Calu3 (cell line): ENCODE measurements at regions of chr11 and their contacts with region 1.

Region 1: GRCh38 chr11:102293873-102294601 is 23.2 kb upstream of the BIRC3 start:
- DNase-seq: no peak
- H3K4me3 Mint-ChIP-seq: peak overlapping the region; percentile 45
- H3K27ac Mint-ChIP-seq: peak overlapping the region; percentile 16
- H3K4me1 Mint-ChIP-seq: peaks cover 24% of the 10 kb centered on the region
- H3K27me3 Mint-ChIP-seq: no peaks in the 10 kb centered on the region
- CTCF ChIP-seq: no peak

Region 2: DNA sequence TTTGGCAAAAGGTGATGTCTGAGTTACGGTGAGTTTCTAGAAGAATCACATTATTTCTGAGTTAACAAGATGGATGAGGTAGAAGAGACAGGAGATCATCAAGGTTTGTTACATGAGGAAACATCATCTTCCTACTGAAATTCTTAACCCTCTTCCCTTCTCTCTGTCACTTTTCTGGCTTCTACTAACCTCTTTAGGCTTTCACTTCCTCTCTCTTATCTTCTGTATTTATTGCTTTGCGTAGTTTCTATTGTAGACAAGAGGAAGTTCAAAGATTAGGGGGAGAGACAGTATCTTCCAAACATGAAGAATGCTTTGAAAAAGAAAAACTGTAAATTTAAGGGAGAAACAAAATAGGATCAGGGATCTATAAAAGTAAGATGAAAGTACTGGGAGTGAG is 785.7 kb before region 1 on chr11:
- CTCF ChIA-PET with region 1: no interaction called
- intact Hi-C with region 1: no loop called
- DNase-seq: no peak
- H3K4me3 Mint-ChIP-seq: no peak overlapping the region
- H3K27ac Mint-ChIP-seq: no peak overlapping the region
- H3K4me1 Mint-ChIP-seq: no peaks in the 10 kb centered on the region
- H3K27me3 Mint-ChIP-seq: no peaks in the 10 kb centered on the region
- CTCF ChIP-seq: no peak

Region 3: DNA sequence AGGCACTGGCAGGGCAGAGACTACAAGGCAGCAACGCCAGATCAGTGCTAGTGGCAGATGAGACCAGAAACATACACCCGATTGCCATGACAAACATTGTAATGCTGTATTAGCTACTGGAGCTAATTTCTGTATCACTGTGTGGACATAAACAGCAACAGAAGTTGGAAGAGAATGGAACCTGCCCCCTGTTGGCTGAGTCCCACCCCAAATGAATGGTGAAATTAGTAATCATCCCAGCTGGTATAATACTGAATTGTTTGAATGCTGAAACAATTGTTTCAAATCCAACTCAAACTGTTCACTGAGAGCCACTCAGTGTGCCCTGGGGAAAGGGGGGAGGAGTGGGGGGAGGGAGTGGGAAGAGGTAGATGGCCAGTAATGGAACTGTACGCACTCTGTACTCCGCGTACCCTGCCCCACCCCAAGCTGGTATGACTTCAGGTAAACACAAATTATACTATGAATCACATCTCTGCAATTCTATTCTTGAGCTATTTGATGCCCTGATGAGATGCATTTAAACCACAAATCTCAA is 12.1 kb after region 1 on chr11:
- CTCF ChIA-PET with region 1: interaction called, 17 read pairs
- intact Hi-C with region 1: no loop called
- DNase-seq: peak; percentile 80
- H3K4me3 Mint-ChIP-seq: peak overlapping the region; percentile 52
- H3K27ac Mint-ChIP-seq: peak overlapping the region; percentile 87
- H3K4me1 Mint-ChIP-seq: peaks cover 39% of the 10 kb centered on the region
- H3K27me3 Mint-ChIP-seq: no peaks in the 10 kb centered on the region
- CTCF ChIP-seq: peak; percentile 26

Region 4: DNA sequence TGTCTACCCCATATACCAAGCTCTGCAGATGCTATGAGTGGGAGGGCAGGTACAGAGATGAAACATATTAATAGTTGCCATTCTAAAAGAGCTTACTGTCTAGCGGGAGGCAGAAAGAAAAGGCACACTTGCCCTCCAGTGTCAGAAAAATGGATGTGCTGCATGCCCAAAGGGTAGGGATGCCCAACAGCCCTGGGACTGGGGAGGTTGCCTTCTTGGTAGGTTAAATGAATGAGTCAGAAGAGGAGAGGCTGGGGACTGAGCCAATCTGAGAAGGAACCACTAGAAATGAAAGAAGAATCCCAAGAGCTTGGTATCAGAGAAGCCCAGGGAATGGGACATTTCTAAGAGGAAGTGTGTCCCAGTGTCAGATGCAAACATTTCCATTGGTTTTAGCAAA is 24.4 kb after region 1 on chr11:
- CTCF ChIA-PET with region 1: interaction called, 11 read pairs
- intact Hi-C with region 1: loop called (anchors 1 kb)
- DNase-seq: peak; percentile 43
- H3K4me3 Mint-ChIP-seq: peak overlapping the region; percentile 74
- H3K27ac Mint-ChIP-seq: peak overlapping the region; percentile 96
- H3K4me1 Mint-ChIP-seq: peaks cover 44% of the 10 kb centered on the region
- H3K27me3 Mint-ChIP-seq: no peaks in the 10 kb centered on the region
- CTCF ChIP-seq: no peak